ENCODE measurements at regions of chr2 and their contacts with region 1.

Region 1: GRCh38 chr2:46749042-46749531 is 166.5 kb downstream of the MCFD2 start:
- DNase-seq: no peak
- H3K4me3 ChIP-seq: no peak overlapping the region
- H3K27ac ChIP-seq: peak overlapping the region in 3 of 4 donors; percentile 7 to 40 (median 14)
- H3K4me1 ChIP-seq: peaks cover 6 to 33% (median 15%) of the 10 kb centered on the region in 4 donors
- H3K27me3 ChIP-seq: no peaks in the 10 kb centered on the region
- CTCF ChIP-seq: no peak
- EP300 ChIP-seq: no peak
- POLR2A ChIP-seq: no peak

Region 2: DNA sequence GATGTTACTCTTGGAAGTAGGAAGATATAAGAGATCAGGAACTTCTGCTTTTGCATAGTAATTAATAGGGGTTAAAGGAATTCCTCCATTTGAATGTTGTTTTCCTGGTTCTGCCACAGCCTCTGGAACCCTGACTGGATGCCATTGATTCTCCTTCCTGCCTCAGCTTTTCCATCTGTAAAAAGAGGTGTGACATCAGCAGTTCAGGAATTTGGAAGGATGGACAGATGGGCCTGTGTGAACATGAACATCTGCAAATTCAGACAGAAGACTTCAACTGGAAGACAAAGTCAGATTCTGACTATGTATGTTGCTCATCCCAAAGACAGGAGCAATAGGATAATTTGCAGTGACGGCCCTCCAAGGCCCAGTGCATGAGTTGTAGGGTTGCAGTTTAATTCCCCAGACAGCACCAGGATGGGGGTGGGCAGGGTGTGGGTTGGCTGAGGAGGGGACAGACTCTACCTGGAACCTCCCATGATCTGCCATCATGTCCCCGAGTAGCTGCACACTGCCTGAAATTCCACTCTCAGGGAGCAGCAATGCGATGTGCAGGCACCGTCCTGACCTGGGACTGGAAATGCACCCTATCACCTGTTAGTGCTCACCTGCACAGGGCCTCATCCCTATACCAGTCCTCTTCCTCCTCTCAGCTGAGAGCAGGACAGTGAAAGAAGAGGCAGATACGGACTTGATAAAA is 550.8 kb before region 1 on chr2:
- in situ Hi-C with region 1: no loop called
- intact Hi-C with region 1: loop called (anchors 10 kb)
- DNase-seq: no peak
- H3K4me3 ChIP-seq: no peak overlapping the region
- H3K27ac ChIP-seq: no peak overlapping the region
- H3K4me1 ChIP-seq: no peaks in the 10 kb centered on the region
- H3K27me3 ChIP-seq: no peaks in the 10 kb centered on the region
- CTCF ChIP-seq: no peak
- EP300 ChIP-seq: no peak
- POLR2A ChIP-seq: no peak

Region 3: GRCh38 chr2:46699934-46700256 is 49.2 kb before region 1 on chr2:
- in situ Hi-C with region 1: no loop called
- intact Hi-C with region 1: no loop called
- DNase-seq: no peak
- H3K4me3 ChIP-seq: peak overlapping the region; percentile 84 to 91 (median 89)
- H3K27ac ChIP-seq: peak overlapping the region; percentile 95 to 98 (median 96)
- H3K4me1 ChIP-seq: peaks cover 8 to 41% (median 32%) of the 10 kb centered on the region in 4 donors
- H3K27me3 ChIP-seq: no peaks in the 10 kb centered on the region
- CTCF ChIP-seq: no peak
- EP300 ChIP-seq: no peak
- POLR2A ChIP-seq: no peak

Measured in transverse colon (tissue), 4 donors.